Activated T-helper 2 cell treated with anti-CD3 and anti-CD28 coated beads, Interferon-gamma antibody, Interleukin-2, Interleukin-4, amounts not matched to agents 10 μg/mL and 5 μg/mL and 100 μg/mL, durations not matched to agents 14 hours and 24 hours and 36 hours (primary cell): ENCODE measurements at regions of chr16 and their contacts with region 1.

Region 1: GRCh38 chr16:8797364-8798173 is at the starts of genes PMM2 and TMEM186:
- DNase-seq: peak; percentile 94
- H3K4me3 Mint-ChIP-seq: peak within 1 kb of the TSS; percentile 95
- H3K27ac Mint-ChIP-seq: peak within 1 kb of the TSS; percentile 90
- H3K4me1 Mint-ChIP-seq: peaks cover 36% of the 10 kb centered on the region
- H3K27me3 Mint-ChIP-seq: no peaks in the 10 kb centered on the region
- total RNA-seq, gene PMM2: 62.5 and 67.6 TPM in 2 replicates
- total RNA-seq, gene TMEM186: 15.6 and 15.9 TPM in 2 replicates

Region 2: GRCh38 chr16:8567750-8568617 is 229.6 kb before region 1 on chr16:
- intact Hi-C with region 1: loop called (anchors 2 kb)
- DNase-seq: peak; percentile 71
- H3K4me3 Mint-ChIP-seq: no peak overlapping the region
- H3K27ac Mint-ChIP-seq: no peak overlapping the region
- H3K4me1 Mint-ChIP-seq: peaks cover 6% of the 10 kb centered on the region
- H3K27me3 Mint-ChIP-seq: no peaks in the 10 kb centered on the region

Region 3: DNA sequence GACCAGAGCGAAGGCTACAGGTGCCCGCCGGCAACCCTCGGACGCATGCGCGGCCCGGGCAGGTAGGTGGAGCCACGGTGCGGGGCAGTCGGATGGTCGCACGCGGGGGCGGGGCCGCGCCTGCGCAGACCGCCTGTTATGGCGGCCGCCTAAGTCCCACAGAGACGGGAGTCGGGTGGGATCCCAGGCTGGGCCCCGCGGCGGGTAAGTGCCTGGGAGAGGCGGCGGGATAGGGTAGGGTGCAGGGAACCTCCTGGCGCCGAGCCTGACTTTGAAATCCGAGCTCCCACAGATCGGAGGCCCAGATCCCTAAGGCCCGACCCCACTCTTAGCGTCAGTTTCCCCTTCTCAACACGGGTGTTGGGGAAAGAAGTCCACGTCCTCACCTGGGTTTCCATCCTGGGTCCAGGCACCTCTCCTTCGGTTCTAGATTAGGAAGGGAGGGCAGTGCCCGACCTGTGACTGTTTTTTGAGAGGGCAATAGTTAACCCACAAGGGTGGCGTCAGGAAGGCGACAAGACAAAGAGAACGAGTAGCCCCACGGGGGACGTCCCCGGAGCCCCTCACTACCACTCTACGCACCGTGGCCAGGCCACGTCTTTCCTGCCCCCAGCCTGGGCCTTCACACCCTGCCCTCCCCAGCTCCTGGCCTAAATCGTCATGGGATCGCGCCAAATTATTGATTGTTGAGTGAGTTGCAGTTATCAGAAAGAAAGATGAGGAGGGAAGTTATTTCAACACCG is 175.8 kb before region 1 on chr16 and contains the start of gene METTL22:
- intact Hi-C with region 1: loop called (anchors 2 kb)
- DNase-seq: peak; percentile 87
- H3K4me3 Mint-ChIP-seq: peak within 1 kb of the TSS; percentile 90
- H3K27ac Mint-ChIP-seq: peak within 1 kb of the TSS; percentile 80
- H3K4me1 Mint-ChIP-seq: peaks cover 19% of the 10 kb centered on the region
- H3K27me3 Mint-ChIP-seq: peaks cover 4% of the 10 kb centered on the region
- total RNA-seq, gene METTL22: 34.9 and 39.0 TPM in 2 replicates

Region 4: DNA sequence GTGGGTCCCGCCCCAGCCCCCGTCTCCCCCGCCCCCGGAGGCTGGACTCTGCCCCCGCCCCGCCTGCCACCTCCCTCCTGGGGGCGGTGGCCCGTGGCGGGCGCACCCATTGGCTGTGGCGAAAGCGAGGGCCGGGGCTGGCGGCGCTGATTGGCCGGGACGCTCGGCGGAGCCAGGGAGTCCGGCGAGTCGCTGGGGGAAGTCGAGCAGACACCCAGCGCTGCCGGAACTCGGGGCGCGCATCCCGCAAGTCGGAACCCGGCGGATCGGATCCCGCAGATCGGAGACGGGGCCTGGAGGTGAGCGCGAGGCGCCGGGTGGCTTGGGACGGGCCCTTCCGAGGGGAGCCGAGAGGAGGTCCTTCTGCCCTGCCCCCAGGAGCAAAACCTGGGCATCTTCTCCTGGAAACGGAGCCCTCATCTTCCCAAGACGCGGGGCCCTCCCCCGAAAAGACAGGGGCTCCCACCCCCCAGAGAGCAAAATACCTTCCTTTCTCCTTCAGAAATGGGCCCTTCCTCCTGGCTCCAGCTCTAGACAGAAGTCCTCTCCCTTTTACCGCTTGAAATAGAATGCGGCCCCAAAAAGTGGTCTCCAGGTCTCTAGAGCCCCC is 123.1 kb before region 1 on chr16 and contains the start of gene ABAT:
- intact Hi-C with region 1: loop called (anchors 1 kb)
- DNase-seq: peak; percentile 90
- H3K4me3 Mint-ChIP-seq: peak within 1 kb of the TSS; percentile 95
- H3K27ac Mint-ChIP-seq: peak within 1 kb of the TSS; percentile 95
- H3K4me1 Mint-ChIP-seq: peaks cover 38% of the 10 kb centered on the region
- H3K27me3 Mint-ChIP-seq: no peaks in the 10 kb centered on the region
- total RNA-seq, gene ABAT: 22.5 and 24.2 TPM in 2 replicates

Region 5: DNA sequence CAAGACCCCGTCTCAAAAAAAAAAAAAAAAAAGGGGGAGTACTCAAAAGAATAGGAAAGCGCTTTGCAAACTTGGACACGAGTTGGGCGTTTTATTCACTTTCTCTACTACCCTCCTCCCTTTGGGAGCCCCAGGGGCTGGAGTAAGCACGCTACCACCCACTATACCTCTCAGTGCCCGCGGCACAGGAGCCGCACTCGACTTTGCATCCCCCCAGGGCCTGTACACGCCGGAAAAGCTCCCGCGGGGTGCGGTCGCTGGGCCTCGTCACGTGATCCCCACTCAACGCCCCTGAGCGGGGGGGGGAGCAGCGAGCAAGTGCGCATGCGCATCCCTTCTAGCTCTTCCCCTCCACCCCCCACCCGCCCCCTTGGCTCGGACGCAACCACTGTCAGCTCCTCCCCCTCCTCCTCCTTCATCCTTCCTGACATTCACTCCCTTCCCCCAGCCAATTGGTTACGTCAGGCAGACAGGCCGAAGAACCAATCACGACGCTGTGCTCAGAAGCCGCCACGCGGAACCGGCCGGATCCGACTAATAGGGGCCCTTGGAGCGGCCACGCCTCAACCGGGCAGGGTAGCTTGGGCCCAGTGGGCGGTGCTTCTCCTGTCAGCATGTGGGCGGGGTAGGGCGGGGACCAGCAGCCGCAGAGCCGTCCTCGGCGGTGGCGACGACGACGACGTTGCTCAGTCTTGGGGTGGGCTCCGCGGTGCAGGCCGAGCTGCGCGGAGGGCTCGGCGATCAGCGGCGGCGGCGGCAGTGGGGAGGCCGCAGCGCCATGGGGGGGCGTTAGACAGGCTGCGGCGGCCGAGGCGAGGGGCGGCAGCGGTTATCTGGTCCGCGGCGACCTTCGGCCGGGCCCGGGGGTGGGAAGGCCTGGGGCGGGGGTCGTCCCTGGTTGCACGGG is 293.6 kb after region 1 on chr16 and contains the start of gene HAPSTR1:
- intact Hi-C with region 1: loop called (anchors 5 kb)
- DNase-seq: peak; percentile 98
- H3K4me3 Mint-ChIP-seq: peak within 1 kb of the TSS; percentile 98
- H3K27ac Mint-ChIP-seq: peak within 1 kb of the TSS; percentile 95
- H3K4me1 Mint-ChIP-seq: peaks cover 25% of the 10 kb centered on the region
- H3K27me3 Mint-ChIP-seq: no peaks in the 10 kb centered on the region
- total RNA-seq, gene HAPSTR1: 54.5 and 54.9 TPM in 2 replicates

Region 6: DNA sequence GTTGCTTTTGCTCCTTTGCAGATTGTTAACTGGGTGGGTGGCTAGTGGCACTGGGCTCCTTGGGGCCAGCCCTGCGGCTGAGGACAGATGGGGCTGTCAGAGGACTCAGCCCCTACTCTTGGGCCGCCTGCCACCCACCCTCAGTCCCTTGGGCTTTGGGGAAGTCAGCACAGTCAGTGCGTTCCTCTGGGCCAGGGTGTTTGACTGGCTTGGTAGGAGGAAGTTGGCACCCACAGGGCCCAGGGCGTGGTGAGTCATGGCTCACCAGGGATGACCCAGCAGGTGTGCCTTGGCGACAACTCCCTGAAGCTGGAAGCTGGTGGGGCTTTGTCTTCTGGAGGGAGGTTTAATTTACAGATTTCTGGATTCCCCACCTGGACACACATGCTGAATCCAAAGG is 326.3 kb after region 1 on chr16:
- intact Hi-C with region 1: loop called (anchors 5 kb)
- DNase-seq: no peak
- H3K4me3 Mint-ChIP-seq: no peak overlapping the region
- H3K27ac Mint-ChIP-seq: no peak overlapping the region
- H3K4me1 Mint-ChIP-seq: peaks cover 35% of the 10 kb centered on the region
- H3K27me3 Mint-ChIP-seq: no peaks in the 10 kb centered on the region